K562 (cell line): ENCODE measurements at regions of chr9 and their contacts with region 1.

Region 1: GRCh38 chr9:124794902-124795491 is 18.1 kb downstream of the OLFML2A start:
- DNase-seq: peak; percentile 58 to 78 (median 74)
- ATAC-seq: peak; percentile 98
- H3K4me3 ChIP-seq: no peak overlapping the region
- H3K27ac ChIP-seq: no peak overlapping the region
- H3K4me1 ChIP-seq: peaks cover 2 to 20% of the 10 kb centered on the region in 2 experiments; a peak in 2 of 5 replicates
- H3K27me3 ChIP-seq: peaks cover 0 to 17% of the 10 kb centered on the region in 2 experiments; a peak in 2 of 5 replicates
- CTCF ChIP-seq: peak; percentile 58 to 90 (median 62)
- EP300 ChIP-seq: no peak
- POLR2A ChIP-seq: no peak
- RAD21 ChIP-seq: peak in 1 of 2 experiments; percentile 78; a peak in 3 of 4 replicates

Region 2: GRCh38 chr9:124721109-124721906 is 73.7 kb before region 1 on chr9:
- CTCF ChIA-PET with region 1: no interaction called
- POLR2A ChIA-PET with region 1: no interaction called
- in situ Hi-C with region 1: no loop called
- intact Hi-C with region 1: no loop called
- DNase-seq: peak in 1 of 4 experiments; percentile 31
- ATAC-seq: peak; percentile 73
- H3K4me3 ChIP-seq: no peak overlapping the region
- H3K27ac ChIP-seq: peak overlapping the region; percentile 55; the same call in 1 of the 3 replicates
- H3K4me1 ChIP-seq: peaks cover 0 to 26% of the 10 kb centered on the region in 2 experiments; a peak in 3 of 5 replicates
- H3K27me3 ChIP-seq: no peaks in the 10 kb centered on the region
- CTCF ChIP-seq: no peak
- EP300 ChIP-seq: no peak
- POLR2A ChIP-seq: no peak
- RAD21 ChIP-seq: no peak

Region 3: DNA sequence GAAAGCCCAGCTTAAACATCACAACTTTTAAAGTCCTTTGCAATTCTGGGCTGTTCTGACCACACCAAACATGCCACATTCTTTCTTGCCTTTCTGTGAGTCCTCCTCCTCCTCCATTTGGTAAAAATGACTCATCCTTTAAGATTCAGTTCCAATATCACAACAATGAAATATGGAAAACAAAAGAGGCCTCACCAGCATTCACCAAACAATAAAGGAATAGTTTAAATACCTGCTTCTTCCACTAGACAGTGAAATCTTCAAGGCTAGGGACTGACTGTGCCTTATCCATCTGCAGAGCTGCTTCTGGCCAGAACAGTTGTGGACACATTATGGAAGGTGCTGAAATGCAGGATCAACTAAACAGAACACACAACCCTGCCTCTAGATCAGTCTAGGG is 59.9 kb before region 1 on chr9:
- CTCF ChIA-PET with region 1: no interaction called
- POLR2A ChIA-PET with region 1: no interaction called
- in situ Hi-C with region 1: no loop called
- intact Hi-C with region 1: no loop called
- DNase-seq: no peak
- ATAC-seq: peak; percentile 65
- H3K4me3 ChIP-seq: no peak overlapping the region
- H3K27ac ChIP-seq: peak overlapping the region; percentile 31; the same call in 1 of the 3 replicates
- H3K4me1 ChIP-seq: peaks cover 7% of the 10 kb centered on the region in 2 experiments; a peak in 2 of 5 replicates
- H3K27me3 ChIP-seq: no peaks in the 10 kb centered on the region
- CTCF ChIP-seq: no peak
- EP300 ChIP-seq: no peak
- POLR2A ChIP-seq: no peak
- RAD21 ChIP-seq: no peak

Region 4: DNA sequence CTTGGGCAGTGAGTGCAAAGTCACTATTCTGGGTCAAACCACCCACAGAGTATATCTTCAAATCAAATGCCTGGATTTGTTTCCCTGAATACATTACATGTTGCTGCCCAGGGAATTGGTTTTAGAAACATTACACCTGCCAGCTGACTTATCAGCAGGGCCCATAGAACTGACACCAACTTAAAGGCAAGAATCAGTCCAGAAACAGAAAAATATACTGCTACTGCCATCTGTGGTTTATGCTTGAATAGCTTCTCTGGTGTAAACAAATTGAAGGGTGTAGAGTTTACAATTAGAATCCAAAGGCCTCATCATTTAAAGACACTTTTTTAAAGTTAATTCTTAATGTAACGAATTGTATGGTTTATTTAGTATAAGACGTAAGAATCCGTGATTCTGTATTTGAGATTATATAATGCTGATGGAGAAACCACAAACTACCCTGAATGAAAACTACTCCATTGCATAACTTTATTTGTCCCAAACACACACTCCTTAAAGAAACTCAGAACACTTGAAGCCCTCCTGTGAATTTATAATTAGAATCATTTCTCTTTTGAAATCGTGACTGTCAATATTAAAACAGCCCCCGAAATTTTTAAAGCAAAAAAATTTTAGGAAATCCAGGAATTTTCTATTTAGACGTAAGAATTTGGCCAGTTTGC is 30.1 kb before region 1 on chr9:
- CTCF ChIA-PET with region 1: no interaction called
- POLR2A ChIA-PET with region 1: no interaction called
- in situ Hi-C with region 1: no loop called
- intact Hi-C with region 1: no loop called
- DNase-seq: peak in 3 of 4 experiments; percentile 25 to 55 (median 51)
- ATAC-seq: peak; percentile 69
- H3K4me3 ChIP-seq: no peak overlapping the region
- H3K27ac ChIP-seq: no peak overlapping the region
- H3K4me1 ChIP-seq: peaks cover 2 to 31% of the 10 kb centered on the region in 2 experiments
- H3K27me3 ChIP-seq: no peaks in the 10 kb centered on the region
- CTCF ChIP-seq: peak; percentile 42 to 72 (median 59); a peak in 5 of 6 replicates
- EP300 ChIP-seq: no peak
- POLR2A ChIP-seq: no peak
- RAD21 ChIP-seq: peak; percentile 41 to 70

Region 5: GRCh38 chr9:124839612-124840299 is 44.8 kb after region 1 on chr9:
- CTCF ChIA-PET with region 1: no interaction called
- POLR2A ChIA-PET with region 1: no interaction called
- in situ Hi-C with region 1: loop called (anchors 10 kb)
- intact Hi-C with region 1: no loop called
- DNase-seq: peak in 3 of 4 experiments; percentile 44 to 50 (median 45)
- ATAC-seq: peak; percentile 73
- H3K4me3 ChIP-seq: no peak overlapping the region
- H3K27ac ChIP-seq: no peak overlapping the region
- H3K4me1 ChIP-seq: peaks cover 0 to 27% of the 10 kb centered on the region in 2 experiments; a peak in 3 of 5 replicates
- H3K27me3 ChIP-seq: no peaks in the 10 kb centered on the region
- CTCF ChIP-seq: peak; percentile 26 to 47 (median 45); a peak in 5 of 6 replicates
- EP300 ChIP-seq: no peak
- POLR2A ChIP-seq: no peak
- RAD21 ChIP-seq: peak in 1 of 2 experiments; percentile 6; a peak in 1 of 4 replicates